Endothelial cell of umbilical vein (primary cell): ENCODE measurements at regions of chr3 and their contacts with region 1.

Region 1: GRCh38 chr3:43769471-43770425 is 79.0 kb downstream of the ABHD5 start:
- DNase-seq: peak; percentile 93
- H3K4me3 ChIP-seq: peak overlapping the region in 1 of 3 experiments; percentile 23
- H3K27ac ChIP-seq: peak overlapping the region; percentile 16
- H3K4me1 ChIP-seq: peaks cover 50% of the 10 kb centered on the region
- H3K27me3 ChIP-seq: no peaks in the 10 kb centered on the region
- CTCF ChIP-seq: peak; percentile 98
- POLR2A ChIP-seq: no peak

Region 2: DNA sequence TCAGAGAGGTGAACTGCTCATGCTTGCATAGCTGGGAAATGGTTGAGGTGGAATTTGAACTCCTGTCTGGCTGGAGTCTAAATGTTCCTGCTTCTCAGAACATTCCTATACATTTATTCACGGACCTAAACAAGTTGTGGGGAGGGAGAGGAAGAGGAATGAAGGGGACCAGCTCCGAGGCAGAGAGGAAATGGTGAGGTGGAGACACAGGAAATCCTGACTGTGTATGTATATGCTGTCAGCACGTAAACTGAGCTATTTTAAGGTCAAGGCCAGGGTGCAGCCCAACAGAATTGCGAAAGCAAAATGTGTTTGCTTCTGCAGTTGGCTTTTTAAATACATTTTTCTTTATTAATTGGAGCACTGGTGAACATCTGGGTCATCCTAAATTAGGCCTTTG is 589.7 kb before region 1 on chr3:
- CTCF ChIA-PET with region 1: no interaction called
- POLR2A ChIA-PET with region 1: no interaction called
- dilution Hi-C with region 1: no loop called
- intact Hi-C with region 1: loop called (anchors 10 kb)
- DNase-seq: peak; percentile 96
- H3K4me3 ChIP-seq: no peak overlapping the region
- H3K27ac ChIP-seq: peak overlapping the region; percentile 89
- H3K4me1 ChIP-seq: peaks cover 47% of the 10 kb centered on the region
- H3K27me3 ChIP-seq: no peaks in the 10 kb centered on the region
- CTCF ChIP-seq: no peak
- POLR2A ChIP-seq: no peak

Region 3: DNA sequence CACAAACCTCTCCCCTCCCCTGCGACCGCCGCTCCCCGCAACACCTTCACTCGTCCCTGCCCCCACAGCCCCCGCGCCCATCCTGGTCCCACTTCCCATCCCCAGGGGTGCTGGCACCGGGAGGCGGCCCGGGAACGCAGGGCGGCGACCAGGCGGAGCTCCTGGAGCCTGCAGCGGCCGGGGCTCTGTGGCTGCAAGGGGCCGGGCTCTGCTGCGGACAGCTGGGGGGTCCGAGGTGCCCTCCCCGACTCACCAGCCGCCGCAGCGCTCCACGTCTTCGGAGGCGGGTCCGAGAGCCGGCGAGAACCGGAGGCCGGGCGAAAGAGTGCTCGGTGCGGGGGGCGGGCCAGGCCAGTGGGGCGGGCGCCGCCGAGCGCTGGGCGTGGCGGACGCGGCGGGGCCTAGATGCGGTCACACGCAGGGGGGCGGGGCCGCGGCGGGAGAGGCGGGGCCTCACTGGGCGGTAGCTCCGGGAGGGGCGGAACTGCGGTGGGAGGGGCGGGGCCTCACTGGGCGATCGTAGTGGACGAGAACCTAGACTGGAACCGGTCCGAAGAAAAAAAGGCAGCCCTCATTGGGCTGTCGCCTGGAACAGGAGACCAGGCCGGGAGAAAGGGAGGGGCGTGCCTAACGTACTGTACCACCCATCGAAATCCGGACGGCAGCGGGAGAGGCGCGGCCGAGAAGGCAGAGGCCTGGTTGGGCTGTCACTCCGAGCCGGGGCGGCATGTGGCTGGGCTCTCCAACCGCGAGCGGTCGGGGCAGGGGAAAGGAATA is 147.9 kb before region 1 on chr3 and contains the start of gene ANO10:
- CTCF ChIA-PET with region 1: no interaction called
- POLR2A ChIA-PET with region 1: no interaction called
- dilution Hi-C with region 1: no loop called
- intact Hi-C with region 1: loop called (anchors 1 kb)
- DNase-seq: peak; percentile 99
- H3K4me3 ChIP-seq: peak within 1 kb of the TSS; percentile 75 to 83 (median 81)
- H3K27ac ChIP-seq: peak within 1 kb of the TSS; percentile 63
- H3K4me1 ChIP-seq: peaks cover 10% of the 10 kb centered on the region
- H3K27me3 ChIP-seq: no peaks in the 10 kb centered on the region
- CTCF ChIP-seq: no peak
- POLR2A ChIP-seq: peak; percentile 69
- total RNA-seq, gene ANO10: 40.9 and 45.8 TPM in 2 replicates

Region 4: GRCh38 chr3:43742920-43743319 is 26.8 kb before region 1 on chr3:
- CTCF ChIA-PET with region 1: interaction called, 14 read pairs
- POLR2A ChIA-PET with region 1: interaction called, 10 read pairs
- dilution Hi-C with region 1: no loop called
- intact Hi-C with region 1: loop called (anchors 1 kb)
- DNase-seq: peak; percentile 92
- H3K4me3 ChIP-seq: no peak overlapping the region
- H3K27ac ChIP-seq: peak overlapping the region; percentile 43
- H3K4me1 ChIP-seq: peaks cover 21% of the 10 kb centered on the region
- H3K27me3 ChIP-seq: no peaks in the 10 kb centered on the region
- CTCF ChIP-seq: no peak
- POLR2A ChIP-seq: no peak

Region 5: DNA sequence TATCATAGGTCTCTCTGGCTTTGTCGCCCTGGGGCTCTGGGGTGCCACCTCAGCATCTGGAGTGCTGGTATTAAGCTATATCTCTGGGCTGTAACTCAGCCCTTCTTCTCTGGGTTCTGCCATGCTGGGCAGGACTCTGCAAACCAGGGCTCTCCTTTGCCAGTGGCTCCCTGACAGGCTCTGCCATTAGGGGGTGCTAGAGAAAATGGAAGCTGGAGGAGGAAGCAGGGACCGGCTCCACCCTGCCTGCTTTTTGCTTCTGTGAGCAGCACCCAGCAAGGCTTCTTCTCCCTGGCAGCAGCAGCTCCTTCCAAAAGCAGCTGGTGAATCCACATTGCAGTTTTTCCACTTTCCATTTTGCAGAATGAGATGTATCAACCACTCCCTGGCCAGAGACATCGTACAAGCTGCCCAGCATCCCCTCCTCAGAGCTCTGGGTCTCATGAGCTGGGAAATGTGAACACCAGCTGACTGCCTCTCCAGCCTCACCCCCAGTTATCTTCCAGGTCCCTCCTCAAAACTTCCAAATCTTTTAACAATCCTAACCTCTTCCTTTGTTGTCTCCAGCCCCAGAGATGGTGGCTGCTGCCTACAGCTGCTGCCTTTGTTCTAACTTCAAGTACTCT is 86.0 kb after region 1 on chr3:
- CTCF ChIA-PET with region 1: interaction called, 20 read pairs
- POLR2A ChIA-PET with region 1: no interaction called
- dilution Hi-C with region 1: no loop called
- intact Hi-C with region 1: no loop called
- DNase-seq: peak; percentile 52
- H3K4me3 ChIP-seq: no peak overlapping the region
- H3K27ac ChIP-seq: no peak overlapping the region
- H3K4me1 ChIP-seq: no peaks in the 10 kb centered on the region
- H3K27me3 ChIP-seq: peaks cover 56% of the 10 kb centered on the region in 2 experiments
- CTCF ChIP-seq: peak; percentile 78 to 82
- POLR2A ChIP-seq: no peak

Region 6: GRCh38 chr3:44114142-44114541 is 344.4 kb after region 1 on chr3:
- CTCF ChIA-PET with region 1: interaction called, 6 read pairs
- POLR2A ChIA-PET with region 1: no interaction called
- dilution Hi-C with region 1: no loop called
- intact Hi-C with region 1: loop called (anchors 1 kb)
- DNase-seq: peak; percentile 34
- H3K4me3 ChIP-seq: no peak overlapping the region
- H3K27ac ChIP-seq: no peak overlapping the region
- H3K4me1 ChIP-seq: no peaks in the 10 kb centered on the region
- H3K27me3 ChIP-seq: peaks cover 0 to 2% of the 10 kb centered on the region in 2 experiments
- CTCF ChIP-seq: peak; percentile 37 to 79
- POLR2A ChIP-seq: no peak